Activated CD4-positive, alpha-beta T cell treated with anti-CD3 and anti-CD28 coated beads, Interleukin-2, amount 10 ng/mL, durations not matched to agents 24 days and 14 days (primary cell): ENCODE measurements at regions of chr1 and their contacts with region 1.

Region 1: GRCh38 chr1:23867953-23868556 is at the start of gene FUCA1:
- DNase-seq: peak; percentile 99
- H3K4me3 Mint-ChIP-seq: peak within 1 kb of the TSS; percentile 81
- H3K27ac Mint-ChIP-seq: peak within 1 kb of the TSS; percentile 24
- H3K4me1 Mint-ChIP-seq: peaks cover 21% of the 10 kb centered on the region
- H3K27me3 Mint-ChIP-seq: peaks cover 9% of the 10 kb centered on the region
- total RNA-seq, gene FUCA1: 3.4 and 3.5 TPM in 2 replicates

Region 2: GRCh38 chr1:23809751-23810171 is 58.3 kb before region 1 on chr1:
- intact Hi-C with region 1: loop called (anchors 1 kb)
- DNase-seq: peak; percentile 94
- H3K4me3 Mint-ChIP-seq: no peak overlapping the region
- H3K27ac Mint-ChIP-seq: no peak overlapping the region
- H3K4me1 Mint-ChIP-seq: peaks cover 13% of the 10 kb centered on the region
- H3K27me3 Mint-ChIP-seq: no peaks in the 10 kb centered on the region

Region 3: GRCh38 chr1:23825076-23825761 is 42.8 kb before region 1 on chr1 and contains the start of gene HMGCL:
- intact Hi-C with region 1: loop called (anchors 1 kb)
- DNase-seq: peak; percentile 96
- H3K4me3 Mint-ChIP-seq: peak within 1 kb of the TSS; percentile 95
- H3K27ac Mint-ChIP-seq: peak within 1 kb of the TSS; percentile 91
- H3K4me1 Mint-ChIP-seq: peaks cover 16% of the 10 kb centered on the region
- H3K27me3 Mint-ChIP-seq: peaks cover 6% of the 10 kb centered on the region
- total RNA-seq, gene HMGCL: 20.4 and 20.7 TPM in 2 replicates